Natural killer cell (primary cell): ENCODE measurements at regions of chrX and their contacts with region 1.

Region 1: DNA sequence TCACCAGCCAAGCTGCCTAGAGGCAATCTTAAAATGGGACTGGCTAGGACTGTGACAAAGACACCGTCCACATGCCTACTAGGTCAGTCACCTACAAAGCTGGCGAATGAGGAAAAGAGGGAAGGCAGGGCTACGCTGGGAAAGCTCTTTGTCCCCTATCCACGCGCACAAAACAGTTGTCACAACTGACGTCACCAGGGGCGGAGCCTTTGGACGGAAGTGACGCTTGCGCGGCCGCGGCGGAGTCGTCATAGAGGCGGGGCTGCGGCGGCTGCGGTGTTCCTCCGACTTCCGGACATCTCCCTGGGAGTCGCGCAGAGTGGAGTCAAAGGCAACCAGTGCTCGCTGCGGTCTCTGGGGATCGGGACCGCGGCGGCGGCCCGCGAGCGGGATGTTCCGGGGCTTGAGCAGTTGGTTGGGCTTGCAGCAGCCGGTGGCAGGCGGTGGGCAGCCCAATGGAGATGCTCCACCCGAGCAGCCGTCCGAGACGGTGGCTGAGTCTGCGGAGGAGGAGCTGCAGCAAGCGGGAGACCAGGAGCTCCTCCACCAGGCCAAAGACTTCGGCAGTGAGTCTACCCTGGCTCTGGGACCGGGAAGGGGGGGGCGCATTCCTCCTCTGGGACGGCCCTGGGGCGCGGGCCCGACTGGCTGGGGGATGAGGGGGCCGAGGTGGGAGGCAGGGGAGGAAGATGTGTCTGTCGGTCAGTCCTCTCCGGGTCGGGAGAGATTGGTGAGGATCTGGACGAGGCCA is at the start of gene SYAP1:
- DNase-seq: peak; percentile 94
- ATAC-seq: peak; percentile 87 to 98 (median 93)
- H3K4me3 ChIP-seq: peak within 1 kb of the TSS; percentile 93
- H3K4me3 Mint-ChIP-seq: peak within 1 kb of the TSS; percentile 99
- H3K27ac ChIP-seq: peak within 1 kb of the TSS; percentile 98
- H3K27ac Mint-ChIP-seq: peak within 1 kb of the TSS; percentile 96 to 99
- H3K4me1 ChIP-seq: peaks cover 18% of the 10 kb centered on the region
- H3K4me1 Mint-ChIP-seq: peaks cover 27 to 35% of the 10 kb centered on the region in 2 donors
- H3K27me3 ChIP-seq: no peaks in the 10 kb centered on the region
- H3K27me3 Mint-ChIP-seq: no peaks in the 10 kb centered on the region
- CTCF ChIP-seq: no peak
- total RNA-seq, gene SYAP1: 42.9 to 58.4 (median 45.4) TPM

Region 2: GRCh38 chrX:16610121-16610621 is 109.3 kb before region 1 on chrX:
- intact Hi-C with region 1: no loop called
- DNase-seq: no peak
- ATAC-seq: no peak
- H3K4me3 ChIP-seq: no peak overlapping the region
- H3K4me3 Mint-ChIP-seq: no peak overlapping the region
- H3K27ac ChIP-seq: no peak overlapping the region
- H3K27ac Mint-ChIP-seq: no peak overlapping the region
- H3K4me1 ChIP-seq: no peaks in the 10 kb centered on the region
- H3K4me1 Mint-ChIP-seq: no peaks in the 10 kb centered on the region
- H3K27me3 ChIP-seq: no peaks in the 10 kb centered on the region
- H3K27me3 Mint-ChIP-seq: no peaks in the 10 kb centered on the region
- CTCF ChIP-seq: no peak

Region 3: DNA sequence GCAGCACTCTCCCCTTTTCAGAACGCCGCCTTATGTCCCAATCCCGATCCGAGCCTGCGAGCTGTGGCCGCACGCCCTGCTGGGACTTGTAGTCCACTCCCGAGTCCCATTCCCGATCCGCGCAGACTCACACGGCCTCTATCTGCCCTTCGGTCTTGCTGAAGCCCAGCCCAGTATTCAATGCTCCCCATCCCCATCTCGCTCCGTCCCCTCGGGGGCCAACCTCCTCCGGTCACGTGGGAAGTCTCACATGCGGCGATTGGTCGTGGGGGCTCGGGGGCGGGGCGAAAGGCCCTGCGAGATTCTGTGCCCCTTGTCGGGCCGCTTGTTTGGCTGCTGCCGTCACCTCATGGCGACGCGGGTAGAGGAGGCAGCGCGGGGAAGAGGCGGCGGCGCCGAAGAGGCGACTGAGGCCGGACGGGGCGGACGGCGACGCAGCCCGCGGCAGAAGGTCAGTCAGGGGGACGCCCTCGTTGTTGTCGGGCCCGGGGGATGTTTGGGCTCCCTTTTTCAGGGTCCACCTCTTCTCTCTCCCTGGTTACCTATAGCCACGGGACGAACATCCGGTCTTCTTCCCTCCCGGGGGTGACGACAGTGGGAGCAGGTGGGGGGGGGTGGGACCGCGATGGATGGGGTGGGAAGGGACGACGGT is 66.8 kb after region 1 on chrX and contains the start of gene TXLNG:
- intact Hi-C with region 1: loop called (anchors 2 kb)
- DNase-seq: peak; percentile 90 to 96
- ATAC-seq: peak; percentile 91 to 99 (median 95)
- H3K4me3 ChIP-seq: peak within 1 kb of the TSS; percentile 73
- H3K4me3 Mint-ChIP-seq: peak within 1 kb of the TSS; percentile 99
- H3K27ac ChIP-seq: peak within 1 kb of the TSS; percentile 92
- H3K27ac Mint-ChIP-seq: peak within 1 kb of the TSS; percentile 90 to 91
- H3K4me1 ChIP-seq: peaks cover 6% of the 10 kb centered on the region
- H3K4me1 Mint-ChIP-seq: peaks cover 7 to 19% of the 10 kb centered on the region in 2 donors
- H3K27me3 ChIP-seq: no peaks in the 10 kb centered on the region
- H3K27me3 Mint-ChIP-seq: no peaks in the 10 kb centered on the region
- CTCF ChIP-seq: no peak
- total RNA-seq, gene TXLNG: 8.1 to 16.9 (median 9.9) TPM

Region 4: GRCh38 chrX:16870095-16870860 is 150.8 kb after region 1 on chrX and contains the start of gene RBBP7:
- intact Hi-C with region 1: no loop called
- DNase-seq: peak; percentile 91 to 95
- ATAC-seq: peak; percentile 79 to 91 (median 82)
- H3K4me3 ChIP-seq: peak within 1 kb of the TSS; percentile 90
- H3K4me3 Mint-ChIP-seq: peak within 1 kb of the TSS; percentile 100
- H3K27ac ChIP-seq: peak within 1 kb of the TSS; percentile 98
- H3K27ac Mint-ChIP-seq: peak within 1 kb of the TSS; percentile 97 to 99
- H3K4me1 ChIP-seq: peaks cover 18% of the 10 kb centered on the region
- H3K4me1 Mint-ChIP-seq: peaks cover 32 to 37% of the 10 kb centered on the region in 2 donors
- H3K27me3 ChIP-seq: no peaks in the 10 kb centered on the region
- H3K27me3 Mint-ChIP-seq: peaks cover 0 to 19% of the 10 kb centered on the region in 2 donors
- CTCF ChIP-seq: no peak
- total RNA-seq, gene RBBP7: 124 to 170 (median 139) TPM